ENCODE measurements at regions of chr13 and their contacts with region 1.

Region 1: DNA sequence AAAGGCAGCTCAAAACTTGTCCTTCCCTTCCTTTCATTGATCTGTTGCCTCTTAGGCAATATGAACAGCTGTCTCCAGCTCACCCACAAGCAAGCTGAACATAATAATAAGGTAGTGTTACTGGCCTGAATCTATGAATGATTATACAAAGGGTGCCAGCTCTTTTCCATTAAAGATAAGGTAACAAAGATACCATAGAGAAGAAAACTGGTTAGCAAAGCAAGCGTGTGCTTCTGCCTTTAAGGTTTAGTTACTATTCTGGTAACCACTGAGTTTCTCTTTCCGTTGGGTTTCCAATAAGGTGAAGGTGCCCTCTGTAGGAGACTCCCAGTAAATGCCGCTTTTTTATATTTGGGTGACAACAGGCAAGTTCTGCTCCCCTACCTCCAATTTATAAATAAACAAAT is 12.1 kb upstream of the DACH1 start:
- DNase-seq: no peak
- H3K4me3 Mint-ChIP-seq: no peak overlapping the region
- H3K27ac Mint-ChIP-seq: no peak overlapping the region
- H3K4me1 Mint-ChIP-seq: peaks cover 8% of the 10 kb centered on the region
- H3K27me3 Mint-ChIP-seq: peaks cover 14% of the 10 kb centered on the region

Region 2: DNA sequence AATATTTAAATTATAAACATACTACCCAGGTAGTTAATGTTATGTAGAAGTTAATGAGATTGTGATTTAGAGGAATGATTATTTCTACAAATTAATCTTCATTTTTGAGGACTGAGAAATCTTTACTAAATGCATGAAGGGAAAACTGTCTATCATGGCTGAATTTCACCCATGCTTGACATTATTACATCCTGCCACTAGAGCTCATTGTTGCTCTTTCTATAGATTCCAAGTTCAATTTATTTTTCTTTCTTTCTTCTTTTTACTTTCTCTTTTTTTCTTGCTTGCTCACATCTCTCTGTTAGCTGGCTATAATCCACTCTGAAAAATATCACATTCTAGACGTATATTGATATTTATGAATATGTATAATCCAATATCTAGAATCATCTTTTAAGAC is 1265.8 kb before region 1 on chr13:
- intact Hi-C with region 1: loop called (anchors 10 kb)
- DNase-seq: no peak
- H3K4me3 Mint-ChIP-seq: no peak overlapping the region
- H3K27ac Mint-ChIP-seq: no peak overlapping the region
- H3K4me1 Mint-ChIP-seq: no peaks in the 10 kb centered on the region
- H3K27me3 Mint-ChIP-seq: no peaks in the 10 kb centered on the region

Region 3: DNA sequence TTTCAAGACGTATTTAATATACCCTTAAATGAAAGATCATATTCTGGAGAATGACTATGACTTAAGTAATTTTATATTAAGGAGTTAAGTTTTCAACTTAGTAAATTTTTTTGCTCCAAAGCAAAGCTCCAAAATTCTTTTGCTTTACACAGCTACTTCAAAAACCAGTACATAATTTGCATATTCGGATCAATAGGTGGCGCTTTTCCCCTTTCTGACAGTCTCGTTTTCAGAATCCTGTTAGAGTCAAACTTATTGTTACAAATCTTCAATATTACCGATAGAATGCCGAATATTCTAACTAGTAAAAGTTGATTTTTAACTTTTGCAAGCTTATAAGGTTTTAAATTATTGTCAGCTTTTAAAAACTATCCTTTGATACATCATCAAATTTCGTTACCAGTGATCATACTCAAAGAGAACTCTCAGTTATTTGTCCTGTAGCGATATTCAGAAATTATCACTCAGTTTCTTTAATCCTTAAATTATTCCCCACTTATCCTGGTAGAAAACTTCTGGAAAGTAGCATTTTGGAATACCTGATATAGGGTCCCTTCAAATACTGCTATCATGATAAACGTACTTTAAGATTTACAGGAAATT is 918.2 kb before region 1 on chr13:
- intact Hi-C with region 1: loop called (anchors 10 kb)
- DNase-seq: no peak
- H3K4me3 Mint-ChIP-seq: no peak overlapping the region
- H3K27ac Mint-ChIP-seq: no peak overlapping the region
- H3K4me1 Mint-ChIP-seq: no peaks in the 10 kb centered on the region
- H3K27me3 Mint-ChIP-seq: no peaks in the 10 kb centered on the region

Region 4: GRCh38 chr13:71320452-71320851 is 558.7 kb before region 1 on chr13:
- intact Hi-C with region 1: loop called (anchors 5 kb)
- DNase-seq: no peak
- H3K4me3 Mint-ChIP-seq: no peak overlapping the region
- H3K27ac Mint-ChIP-seq: no peak overlapping the region
- H3K4me1 Mint-ChIP-seq: no peaks in the 10 kb centered on the region
- H3K27me3 Mint-ChIP-seq: no peaks in the 10 kb centered on the region

Region 5: DNA sequence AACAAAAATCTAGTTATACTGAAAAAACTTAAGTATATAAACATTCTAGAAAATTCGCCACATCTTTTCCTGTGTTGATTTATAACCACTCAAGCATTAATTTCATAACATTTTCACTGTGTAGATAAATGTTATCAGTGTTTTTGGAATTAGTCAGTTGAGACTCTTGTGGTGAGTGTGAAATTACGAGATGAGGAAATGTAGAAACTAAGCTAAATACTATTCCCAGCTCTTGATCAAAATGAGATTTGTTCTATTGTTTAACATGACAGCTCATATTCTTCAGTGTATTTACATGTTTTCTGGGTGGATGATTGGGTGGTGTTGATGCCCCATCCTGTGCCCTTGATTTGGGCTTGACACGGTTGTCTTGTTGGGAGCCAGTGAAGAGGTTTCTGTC is 418.9 kb before region 1 on chr13:
- intact Hi-C with region 1: loop called (anchors 10 kb)
- DNase-seq: no peak
- H3K4me3 Mint-ChIP-seq: no peak overlapping the region
- H3K27ac Mint-ChIP-seq: no peak overlapping the region
- H3K4me1 Mint-ChIP-seq: peaks cover 6% of the 10 kb centered on the region
- H3K27me3 Mint-ChIP-seq: peaks cover 3% of the 10 kb centered on the region

Region 6: DNA sequence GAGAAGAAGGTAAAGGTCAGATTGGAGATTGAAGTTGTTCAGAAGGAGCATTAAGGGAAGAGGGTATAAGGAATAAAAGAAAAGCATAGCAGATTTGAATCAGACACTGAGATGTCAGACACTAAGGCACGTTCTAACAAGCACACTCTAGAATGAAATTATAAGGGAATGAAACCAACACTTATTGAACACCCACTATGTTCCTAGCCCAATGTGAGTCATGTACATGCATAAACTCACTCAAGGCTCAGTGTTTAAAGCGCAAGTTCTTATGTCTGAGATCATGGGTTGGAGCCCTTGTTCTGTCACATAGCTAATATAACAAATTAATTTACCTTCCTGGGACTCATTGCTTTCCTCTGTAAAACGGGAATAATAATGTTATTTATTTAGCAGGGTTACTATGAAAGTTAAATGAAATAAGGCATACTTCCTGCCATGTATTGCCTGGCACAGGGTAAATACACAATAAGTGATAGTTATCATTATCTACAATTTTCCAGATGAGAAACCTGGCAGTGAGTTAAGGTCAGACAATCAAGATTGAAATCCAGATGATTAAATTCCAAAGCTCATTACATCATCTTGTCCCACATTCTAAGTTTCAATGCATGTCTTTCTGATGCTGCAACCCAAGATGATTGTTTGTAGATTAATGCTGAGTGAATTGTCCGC is 56.2 kb after region 1 on chr13:
- intact Hi-C with region 1: no loop called
- DNase-seq: no peak
- H3K4me3 Mint-ChIP-seq: no peak overlapping the region
- H3K27ac Mint-ChIP-seq: no peak overlapping the region
- H3K4me1 Mint-ChIP-seq: no peaks in the 10 kb centered on the region
- H3K27me3 Mint-ChIP-seq: no peaks in the 10 kb centered on the region

Measured in activated T-helper 2 cell treated with anti-CD3 and anti-CD28 coated beads, Interferon-gamma antibody, Interleukin-2, Interleukin-4, amounts not matched to agents 10 μg/mL and 5 μg/mL and 100 μg/mL, durations not matched to agents 14 hours and 24 hours and 36 hours (primary cell).